Natural killer cell (primary cell): ENCODE measurements at regions of chr3 and their contacts with region 1.

Region 1: GRCh38 chr3:4493014-4493940 is at the start of gene ITPR1:
- DNase-seq: peak; percentile 91 to 99
- ATAC-seq: peak; percentile 91 to 97 (median 92)
- H3K4me3 ChIP-seq: peak within 1 kb of the TSS; percentile 87
- H3K4me3 Mint-ChIP-seq: peak within 1 kb of the TSS; percentile 99
- H3K27ac ChIP-seq: peak within 1 kb of the TSS; percentile 58
- H3K27ac Mint-ChIP-seq: peak within 1 kb of the TSS; percentile 85 to 92
- H3K4me1 ChIP-seq: peaks cover 24% of the 10 kb centered on the region
- H3K4me1 Mint-ChIP-seq: peaks cover 41 to 52% of the 10 kb centered on the region in 2 donors
- H3K27me3 ChIP-seq: no peaks in the 10 kb centered on the region
- H3K27me3 Mint-ChIP-seq: peaks cover 0 to 4% of the 10 kb centered on the region in 2 donors
- CTCF ChIP-seq: no peak
- total RNA-seq, gene ITPR1: 86.7 to 123 (median 94.8) TPM

Region 2: DNA sequence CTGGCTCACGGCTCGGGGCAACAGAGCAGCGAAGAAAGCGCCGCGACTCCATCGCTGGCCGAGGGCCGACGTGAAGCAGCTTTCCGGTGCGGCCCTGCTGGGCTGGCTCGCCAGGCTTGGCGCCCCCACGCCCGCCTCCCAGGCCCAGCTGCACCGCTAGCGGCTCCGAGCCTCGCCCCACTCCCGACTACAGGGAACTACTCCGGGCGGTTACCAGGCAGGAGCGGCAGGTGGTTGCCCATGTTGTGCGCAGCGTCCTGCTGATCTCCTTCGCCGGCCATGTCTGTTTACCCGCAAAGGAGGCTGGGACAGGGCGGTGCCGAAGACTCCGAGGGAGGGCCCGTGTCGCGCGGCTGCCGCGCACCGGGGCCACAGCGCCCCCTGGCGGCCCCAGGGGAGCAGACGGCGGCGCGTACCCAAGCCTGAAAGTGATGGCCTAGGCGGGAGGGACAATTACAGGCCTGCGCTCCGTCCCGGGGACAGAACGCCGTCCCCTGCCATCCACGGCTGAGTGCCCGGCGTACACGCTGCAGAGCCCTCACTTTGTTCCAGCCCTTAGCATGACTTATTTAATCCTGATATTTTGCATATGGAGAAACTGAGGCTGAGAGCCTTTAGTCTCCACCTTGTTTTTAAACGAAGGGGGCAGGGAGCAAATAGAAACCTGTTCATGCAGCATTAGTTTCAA is 1313.7 kb before region 1 on chr3 and contains the start of gene CRBN:
- intact Hi-C with region 1: loop called (anchors 10 kb)
- DNase-seq: peak; percentile 89 to 95
- ATAC-seq: peak; percentile 96 to 99 (median 98)
- H3K4me3 ChIP-seq: peak within 1 kb of the TSS; percentile 62
- H3K4me3 Mint-ChIP-seq: peak within 1 kb of the TSS; percentile 95
- H3K27ac ChIP-seq: peak within 1 kb of the TSS; percentile 64
- H3K27ac Mint-ChIP-seq: peak within 1 kb of the TSS; percentile 90 to 92
- H3K4me1 ChIP-seq: peaks cover 18% of the 10 kb centered on the region
- H3K4me1 Mint-ChIP-seq: peaks cover 42 to 43% of the 10 kb centered on the region in 2 donors
- H3K27me3 ChIP-seq: no peaks in the 10 kb centered on the region
- H3K27me3 Mint-ChIP-seq: no peaks in the 10 kb centered on the region
- CTCF ChIP-seq: peak; percentile 99
- total RNA-seq, gene CRBN: 126 to 166 (median 139) TPM

Region 3: GRCh38 chr3:3893590-3893989 is 599.7 kb before region 1 on chr3:
- intact Hi-C with region 1: no loop called
- DNase-seq: no peak
- ATAC-seq: no peak
- H3K4me3 ChIP-seq: no peak overlapping the region
- H3K4me3 Mint-ChIP-seq: no peak overlapping the region
- H3K27ac ChIP-seq: no peak overlapping the region
- H3K27ac Mint-ChIP-seq: no peak overlapping the region
- H3K4me1 ChIP-seq: no peaks in the 10 kb centered on the region
- H3K4me1 Mint-ChIP-seq: no peaks in the 10 kb centered on the region
- H3K27me3 ChIP-seq: no peaks in the 10 kb centered on the region
- H3K27me3 Mint-ChIP-seq: no peaks in the 10 kb centered on the region
- CTCF ChIP-seq: no peak

Region 4: DNA sequence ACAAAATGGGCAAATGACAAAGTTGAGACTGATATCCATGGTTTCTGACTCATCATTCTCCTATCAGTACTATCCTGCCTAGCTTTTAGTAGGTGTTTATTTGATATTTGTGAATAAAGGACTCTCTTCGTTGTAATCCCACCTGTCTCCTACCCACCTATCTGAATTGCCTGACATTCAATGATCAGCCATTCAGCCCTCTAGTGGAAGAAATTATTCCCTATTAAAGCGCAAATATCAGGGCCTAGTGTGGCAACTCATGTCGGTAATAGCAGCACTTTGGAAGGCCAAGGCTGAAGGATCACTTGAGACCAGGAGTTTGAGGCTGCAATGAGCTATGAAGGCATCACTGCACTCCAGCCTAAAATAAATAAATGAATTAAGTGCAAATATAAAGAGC is 385.8 kb before region 1 on chr3:
- intact Hi-C with region 1: no loop called
- DNase-seq: no peak
- ATAC-seq: no peak
- H3K4me3 ChIP-seq: no peak overlapping the region
- H3K4me3 Mint-ChIP-seq: no peak overlapping the region
- H3K27ac ChIP-seq: no peak overlapping the region
- H3K27ac Mint-ChIP-seq: no peak overlapping the region
- H3K4me1 ChIP-seq: no peaks in the 10 kb centered on the region
- H3K4me1 Mint-ChIP-seq: no peaks in the 10 kb centered on the region
- H3K27me3 ChIP-seq: no peaks in the 10 kb centered on the region
- H3K27me3 Mint-ChIP-seq: peaks cover 0 to 2% of the 10 kb centered on the region in 2 donors
- CTCF ChIP-seq: no peak

Region 5: DNA sequence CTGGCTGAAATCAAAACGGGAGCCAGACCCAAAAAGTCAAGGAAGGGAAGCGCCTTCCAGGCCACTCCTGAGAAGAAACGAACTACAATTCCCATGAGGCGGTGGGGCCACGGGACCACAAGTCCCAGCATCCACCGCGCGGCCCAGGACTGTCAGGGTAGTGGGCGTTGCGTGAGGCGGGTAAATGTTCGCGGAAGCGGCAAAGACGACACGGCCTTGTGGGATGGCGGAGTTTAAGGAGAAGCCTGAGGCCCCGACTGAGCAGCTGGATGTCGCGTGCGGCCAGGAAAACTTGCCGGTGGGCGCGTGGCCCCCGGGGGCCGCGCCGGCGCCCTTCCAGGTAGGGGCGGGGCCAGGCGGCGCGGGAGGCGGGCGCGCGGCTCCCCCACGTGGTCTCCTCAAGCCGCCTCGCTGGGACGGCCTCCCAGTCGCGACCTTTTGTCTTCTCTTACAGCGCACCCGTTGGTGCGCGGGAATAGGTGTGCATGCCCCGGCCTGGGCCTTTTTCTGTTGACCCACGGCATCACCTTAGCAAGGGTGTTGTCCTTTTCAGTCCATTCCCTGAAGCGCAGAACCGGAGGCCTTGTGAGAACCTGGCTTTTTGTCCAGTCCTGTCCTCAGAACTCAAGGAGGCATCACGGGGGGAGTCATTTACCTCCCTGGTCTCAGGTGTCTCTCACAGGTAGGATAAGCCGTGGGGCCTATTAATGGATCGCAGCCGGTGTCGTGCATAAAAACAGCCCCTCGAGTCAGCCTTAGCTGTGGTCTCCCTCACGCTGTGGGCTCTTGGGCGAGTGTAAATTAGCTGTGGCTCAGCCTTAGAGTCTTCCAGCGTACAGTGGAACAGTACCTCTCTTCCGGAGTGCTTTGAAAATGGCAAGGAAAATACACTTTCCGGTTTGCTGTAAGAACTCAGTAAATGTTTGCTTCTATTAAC is 189.8 kb before region 1 on chr3 and contains the start of gene SETMAR:
- intact Hi-C with region 1: loop called (anchors 5 kb)
- DNase-seq: peak; percentile 78 to 89
- ATAC-seq: peak; percentile 95 to 98 (median 95)
- H3K4me3 ChIP-seq: peak within 1 kb of the TSS; percentile 78
- H3K4me3 Mint-ChIP-seq: peak within 1 kb of the TSS; percentile 95
- H3K27ac ChIP-seq: peak within 1 kb of the TSS; percentile 83
- H3K27ac Mint-ChIP-seq: peak within 1 kb of the TSS; percentile 87 to 93
- H3K4me1 ChIP-seq: peaks cover 16% of the 10 kb centered on the region
- H3K4me1 Mint-ChIP-seq: peaks cover 14 to 18% of the 10 kb centered on the region in 2 donors
- H3K27me3 ChIP-seq: no peaks in the 10 kb centered on the region
- H3K27me3 Mint-ChIP-seq: no peaks in the 10 kb centered on the region
- CTCF ChIP-seq: no peak
- total RNA-seq, gene SETMAR: 4.8 to 9.3 (median 6.4) TPM

Region 6: DNA sequence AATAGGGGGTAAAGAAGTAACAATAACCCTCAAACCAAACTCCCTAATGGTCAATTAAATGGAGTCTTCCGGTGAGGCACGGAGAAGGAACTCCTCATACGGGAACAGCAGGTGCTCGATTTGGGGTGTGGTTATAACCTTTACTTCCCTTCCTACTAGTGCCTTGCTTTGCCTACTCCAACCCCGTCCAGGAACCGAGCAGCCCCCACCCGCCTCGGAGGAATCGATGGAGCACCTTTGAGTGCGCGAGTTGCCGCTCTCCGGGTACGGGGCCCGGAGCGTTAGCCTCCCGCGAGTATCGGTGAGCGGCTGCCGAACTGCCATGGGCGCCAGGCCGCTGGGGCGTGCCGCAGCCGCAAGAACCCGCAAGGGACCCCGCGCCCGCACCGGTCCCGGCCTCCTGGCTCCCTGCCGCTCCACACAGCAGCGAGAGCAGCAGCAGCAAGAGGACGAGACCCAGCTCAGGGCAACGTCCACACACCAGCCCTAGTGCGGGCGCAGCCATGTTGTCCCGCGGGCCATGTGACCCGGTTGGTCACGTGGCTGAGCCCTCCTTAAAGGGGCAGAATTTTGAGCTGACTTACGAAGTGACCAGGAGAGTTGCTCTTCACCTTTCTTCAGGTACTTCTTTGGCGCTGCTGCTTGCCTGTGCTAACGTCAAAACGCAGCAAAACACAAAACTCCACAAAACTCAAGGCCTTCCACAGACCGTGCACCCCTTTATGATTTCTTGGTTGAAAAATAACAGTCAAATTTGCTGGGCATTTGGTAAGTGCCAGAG is 26.3 kb before region 1 on chr3 and contains the start of gene SUMF1:
- intact Hi-C with region 1: loop called (anchors 1 kb)
- DNase-seq: peak; percentile 72 to 84
- ATAC-seq: peak; percentile 94 to 99 (median 94)
- H3K4me3 ChIP-seq: peak within 1 kb of the TSS; percentile 84
- H3K4me3 Mint-ChIP-seq: peak within 1 kb of the TSS; percentile 87
- H3K27ac ChIP-seq: peak within 1 kb of the TSS; percentile 71
- H3K27ac Mint-ChIP-seq: peak within 1 kb of the TSS; percentile 78 to 89
- H3K4me1 ChIP-seq: peaks cover 8% of the 10 kb centered on the region
- H3K4me1 Mint-ChIP-seq: peaks cover 14 to 22% of the 10 kb centered on the region in 2 donors
- H3K27me3 ChIP-seq: no peaks in the 10 kb centered on the region
- H3K27me3 Mint-ChIP-seq: peaks cover 1% of the 10 kb centered on the region in 2 donors
- CTCF ChIP-seq: no peak
- total RNA-seq, gene SUMF1: 16.3 to 19.8 (median 19.3) TPM

Region 7: GRCh38 chr3:4504340-4505261 is 11.3 kb after region 1 on chr3:
- intact Hi-C with region 1: loop called (anchors 1 kb)
- DNase-seq: peak; percentile 17 to 84
- ATAC-seq: peak; percentile 52 to 77 (median 67)
- H3K4me3 ChIP-seq: peak overlapping the region; percentile 16
- H3K4me3 Mint-ChIP-seq: peak overlapping the region; percentile 90
- H3K27ac ChIP-seq: peak overlapping the region; percentile 70
- H3K27ac Mint-ChIP-seq: peak overlapping the region; percentile 80 to 92
- H3K4me1 ChIP-seq: peaks cover 28% of the 10 kb centered on the region
- H3K4me1 Mint-ChIP-seq: peaks cover 50 to 53% of the 10 kb centered on the region in 2 donors
- H3K27me3 ChIP-seq: no peaks in the 10 kb centered on the region
- H3K27me3 Mint-ChIP-seq: no peaks in the 10 kb centered on the region
- CTCF ChIP-seq: no peak

Region 8: DNA sequence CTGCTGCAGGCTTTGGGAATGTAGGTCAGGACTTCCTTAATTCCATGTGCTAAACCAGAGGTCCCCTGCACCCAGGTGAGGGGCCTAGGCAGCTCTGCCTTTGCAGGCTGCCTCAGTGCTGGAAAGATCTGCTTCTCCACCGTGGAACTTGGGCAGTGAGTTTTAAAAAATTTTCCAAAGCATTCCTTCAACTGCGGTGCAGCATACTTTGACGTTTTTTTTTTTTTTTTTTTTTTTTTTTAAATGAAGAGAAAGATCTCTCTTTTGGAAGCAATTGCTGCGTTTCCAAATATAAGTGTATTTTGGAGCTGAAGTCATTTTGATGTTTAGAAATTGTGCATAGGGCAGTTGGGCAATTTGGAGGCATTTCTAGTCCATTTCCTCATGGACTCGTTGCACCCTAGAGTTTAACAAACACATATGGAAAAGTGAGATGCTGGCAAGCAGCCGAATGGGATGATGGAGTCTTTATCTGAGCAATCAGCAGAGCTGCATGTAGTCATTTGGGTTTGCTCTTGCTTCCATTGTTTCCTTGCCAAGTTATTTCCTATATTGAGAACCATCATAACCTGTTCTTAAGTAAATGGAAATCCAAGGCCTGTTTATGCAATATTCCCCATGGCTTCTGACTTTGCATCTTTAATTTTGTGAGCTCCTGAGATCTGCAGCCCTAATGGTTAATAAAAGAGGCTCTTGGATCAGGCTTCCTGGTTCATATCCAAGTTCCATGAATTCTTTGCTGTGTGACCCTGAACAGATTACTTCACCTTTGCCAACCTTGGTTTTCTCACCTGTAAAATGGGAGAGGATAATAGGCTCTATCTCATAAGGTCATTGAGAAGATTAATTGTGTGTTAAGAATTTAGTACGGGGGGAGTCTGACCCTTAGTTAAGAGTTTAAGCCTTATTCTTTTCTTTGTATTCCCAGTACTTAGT is 31.1 kb after region 1 on chr3:
- intact Hi-C with region 1: loop called (anchors 1 kb)
- DNase-seq: no peak
- ATAC-seq: no peak
- H3K4me3 ChIP-seq: no peak overlapping the region
- H3K4me3 Mint-ChIP-seq: no peak overlapping the region
- H3K27ac ChIP-seq: no peak overlapping the region
- H3K27ac Mint-ChIP-seq: no peak overlapping the region
- H3K4me1 ChIP-seq: peaks cover 4% of the 10 kb centered on the region
- H3K4me1 Mint-ChIP-seq: peaks cover 7 to 23% of the 10 kb centered on the region in 2 donors
- H3K27me3 ChIP-seq: no peaks in the 10 kb centered on the region
- H3K27me3 Mint-ChIP-seq: no peaks in the 10 kb centered on the region
- CTCF ChIP-seq: no peak

Region 9: GRCh38 chr3:4584456-4585249 is 91.4 kb after region 1 on chr3:
- intact Hi-C with region 1: loop called (anchors 5 kb)
- DNase-seq: peak in 1 of 2 donors; percentile 55
- ATAC-seq: peak; percentile 37 to 55 (median 49)
- H3K4me3 ChIP-seq: no peak overlapping the region
- H3K4me3 Mint-ChIP-seq: peak overlapping the region; percentile 87
- H3K27ac ChIP-seq: no peak overlapping the region
- H3K27ac Mint-ChIP-seq: peak overlapping the region; percentile 53 to 91
- H3K4me1 ChIP-seq: peaks cover 28% of the 10 kb centered on the region
- H3K4me1 Mint-ChIP-seq: peaks cover 64 to 79% of the 10 kb centered on the region in 2 donors
- H3K27me3 ChIP-seq: no peaks in the 10 kb centered on the region
- H3K27me3 Mint-ChIP-seq: no peaks in the 10 kb centered on the region
- CTCF ChIP-seq: no peak